AG04450 (cell line): ENCODE measurements at regions of chr6 and their contacts with region 1.

Region 1: DNA sequence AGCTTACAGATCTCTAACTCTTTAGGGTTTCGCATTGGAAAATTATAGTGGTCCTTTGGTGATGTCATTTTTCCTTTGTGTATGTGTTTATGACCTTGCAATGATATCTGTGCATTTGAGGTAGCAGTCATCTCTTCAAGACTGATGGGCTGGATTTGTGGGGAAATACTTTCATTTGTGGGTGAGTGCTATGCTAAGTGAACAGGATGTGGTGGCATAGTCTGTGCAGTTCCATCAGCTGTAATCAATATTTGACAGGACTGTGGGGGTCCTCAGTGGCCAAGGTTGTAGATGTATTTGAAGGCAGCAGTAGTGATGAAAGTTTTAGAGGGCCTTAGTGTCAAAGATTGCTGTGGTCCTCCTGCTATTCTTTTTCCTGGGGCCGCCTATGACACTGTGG is 79.5 kb downstream of the CYP39A1 start:
- DNase-seq: no peak
- H3K4me3 ChIP-seq: no peak overlapping the region
- H3K27ac ChIP-seq: no peak overlapping the region
- H3K27me3 ChIP-seq: no peaks in the 10 kb centered on the region
- CTCF ChIP-seq: no peak

Region 2: GRCh38 chr6:46410334-46410953 is 162.7 kb before region 1 on chr6:
- CTCF ChIA-PET with region 1: no interaction called
- POLR2A ChIA-PET with region 1: no interaction called
- DNase-seq: no peak
- H3K4me3 ChIP-seq: no peak overlapping the region
- H3K27ac ChIP-seq: no peak overlapping the region
- H3K27me3 ChIP-seq: no peaks in the 10 kb centered on the region
- CTCF ChIP-seq: peak; percentile 39

Region 3: DNA sequence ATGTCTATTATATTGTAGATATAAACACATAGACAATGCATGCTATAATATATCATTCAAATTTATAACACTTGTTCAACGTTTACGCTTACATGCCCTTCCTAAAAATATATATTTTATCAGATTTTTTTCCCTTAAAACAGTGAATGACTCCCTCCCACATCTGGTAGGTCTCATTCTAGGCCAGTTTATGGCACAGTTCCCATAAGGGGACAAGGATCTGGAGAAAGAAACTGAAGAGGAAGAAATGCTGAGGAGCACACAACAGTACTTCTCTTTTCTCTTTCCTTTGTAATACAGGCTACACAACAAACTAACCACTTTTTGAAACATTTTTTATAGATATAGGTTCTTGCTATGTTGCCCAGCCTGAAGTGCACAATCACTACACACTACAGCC is 33.3 kb before region 1 on chr6:
- CTCF ChIA-PET with region 1: interaction called, 10 read pairs
- POLR2A ChIA-PET with region 1: no interaction called
- DNase-seq: no peak
- H3K4me3 ChIP-seq: no peak overlapping the region
- H3K27ac ChIP-seq: no peak overlapping the region
- H3K27me3 ChIP-seq: no peaks in the 10 kb centered on the region
- CTCF ChIP-seq: no peak